ENCODE measurements at regions of chr7 and their contacts with region 1.

Region 1: GRCh38 chr7:80392229-80393169 is 119.4 kb downstream of the GNAT3 start:
- DNase-seq: no peak
- H3K4me3 ChIP-seq: no peak overlapping the region
- H3K27ac ChIP-seq: peak overlapping the region in 44 of 59 donors; percentile 1 to 86 (median 56)
- H3K27me3 ChIP-seq: no peaks in the 10 kb centered on the region
- CTCF ChIP-seq: peak; percentile 53 to 86 (median 76)

Region 2: DNA sequence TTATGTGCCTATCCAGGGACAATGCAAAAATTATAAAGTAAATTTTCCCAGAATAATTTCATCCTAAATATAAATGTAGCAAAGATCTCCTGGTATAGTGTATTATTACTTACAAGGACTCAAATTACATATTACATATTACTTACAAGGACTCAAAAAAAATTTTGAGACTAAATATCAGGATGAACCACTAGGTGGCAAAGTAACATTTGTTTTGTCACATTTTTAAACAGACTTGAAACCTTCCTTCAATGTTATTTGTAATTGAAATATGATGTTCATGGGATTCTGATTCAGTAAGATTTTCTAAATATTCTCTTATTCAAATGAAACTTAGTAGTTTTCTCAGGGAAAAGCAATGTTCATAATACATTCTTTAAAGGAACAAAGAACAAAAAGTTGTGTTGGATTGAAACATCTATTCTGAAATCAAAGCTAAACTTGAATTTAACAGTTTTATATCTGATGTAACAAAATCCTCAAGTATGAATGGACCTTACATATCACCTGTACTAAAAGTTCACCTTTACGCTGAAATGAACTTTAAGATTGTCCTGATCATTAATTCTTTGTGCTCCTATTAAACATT is 332.2 kb before region 1 on chr7:
- intact Hi-C with region 1: loop called in 1 of 2 experiments (anchors 10 kb)
- DNase-seq: no peak
- H3K4me3 ChIP-seq: no peak overlapping the region
- H3K27ac ChIP-seq: no peak overlapping the region
- H3K27me3 ChIP-seq: no peaks in the 10 kb centered on the region
- CTCF ChIP-seq: peak; percentile 58 to 95 (median 78)

Region 3: DNA sequence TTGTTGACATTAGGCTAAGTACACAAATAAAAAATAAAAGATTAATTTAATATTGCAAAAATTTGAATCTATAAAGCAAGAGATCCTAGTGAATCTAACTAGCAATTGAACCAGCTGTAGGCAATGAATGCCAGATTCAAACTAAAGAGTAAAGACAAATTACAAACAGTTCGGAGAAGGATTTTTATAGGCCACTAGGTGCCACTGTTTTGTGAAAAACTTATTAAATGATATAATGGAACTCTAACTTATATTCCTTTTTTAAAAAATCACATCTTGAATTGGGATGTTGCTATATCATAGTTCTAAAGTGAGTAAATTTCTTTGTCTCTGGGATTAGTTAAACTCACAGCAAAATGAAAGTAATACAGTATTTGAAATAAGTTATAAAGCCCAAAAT is 297.0 kb before region 1 on chr7:
- intact Hi-C with region 1: loop called in 1 of 2 experiments (anchors 10 kb)
- DNase-seq: no peak
- H3K4me3 ChIP-seq: no peak overlapping the region
- H3K27ac ChIP-seq: peak overlapping the region in 4 of 59 donors; percentile 4 to 24 (median 22)
- H3K27me3 ChIP-seq: no peaks in the 10 kb centered on the region
- CTCF ChIP-seq: peak; percentile 49 to 89 (median 69)

Region 4: DNA sequence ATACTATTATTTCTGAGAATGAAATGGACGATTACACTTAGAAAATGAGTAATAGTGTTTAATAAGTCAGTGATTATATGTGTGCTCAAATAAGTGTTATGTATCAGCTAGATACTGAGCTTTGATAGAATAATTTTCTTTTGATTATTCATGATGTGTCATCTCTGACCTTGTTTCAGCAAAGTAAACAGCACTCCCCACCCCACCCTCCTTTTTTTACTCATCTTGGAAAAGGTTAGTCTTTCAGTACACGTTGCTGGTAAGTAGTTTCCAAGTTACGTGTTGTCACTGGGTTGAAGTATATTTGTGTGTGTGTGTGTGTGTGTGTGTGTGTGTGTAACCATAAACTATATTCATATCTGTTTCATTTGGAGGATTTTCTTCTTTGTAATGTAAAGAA is 173.8 kb before region 1 on chr7:
- intact Hi-C with region 1: no loop called
- DNase-seq: no peak
- H3K4me3 ChIP-seq: no peak overlapping the region
- H3K27ac ChIP-seq: peak overlapping the region in 22 of 59 donors; percentile 0 to 70 (median 40)
- H3K27me3 ChIP-seq: no peaks in the 10 kb centered on the region
- CTCF ChIP-seq: no peak

Region 5: GRCh38 chr7:80463272-80463920 is 70.9 kb after region 1 on chr7:
- intact Hi-C with region 1: no loop called
- DNase-seq: no peak
- H3K4me3 ChIP-seq: no peak overlapping the region
- H3K27ac ChIP-seq: no peak overlapping the region
- H3K27me3 ChIP-seq: peaks cover 0 to 4% (median 0%) of the 10 kb centered on the region in 45 donors
- CTCF ChIP-seq: no peak